ENCODE measurements at regions of chr1 and their contacts with region 1.

Region 1: DNA sequence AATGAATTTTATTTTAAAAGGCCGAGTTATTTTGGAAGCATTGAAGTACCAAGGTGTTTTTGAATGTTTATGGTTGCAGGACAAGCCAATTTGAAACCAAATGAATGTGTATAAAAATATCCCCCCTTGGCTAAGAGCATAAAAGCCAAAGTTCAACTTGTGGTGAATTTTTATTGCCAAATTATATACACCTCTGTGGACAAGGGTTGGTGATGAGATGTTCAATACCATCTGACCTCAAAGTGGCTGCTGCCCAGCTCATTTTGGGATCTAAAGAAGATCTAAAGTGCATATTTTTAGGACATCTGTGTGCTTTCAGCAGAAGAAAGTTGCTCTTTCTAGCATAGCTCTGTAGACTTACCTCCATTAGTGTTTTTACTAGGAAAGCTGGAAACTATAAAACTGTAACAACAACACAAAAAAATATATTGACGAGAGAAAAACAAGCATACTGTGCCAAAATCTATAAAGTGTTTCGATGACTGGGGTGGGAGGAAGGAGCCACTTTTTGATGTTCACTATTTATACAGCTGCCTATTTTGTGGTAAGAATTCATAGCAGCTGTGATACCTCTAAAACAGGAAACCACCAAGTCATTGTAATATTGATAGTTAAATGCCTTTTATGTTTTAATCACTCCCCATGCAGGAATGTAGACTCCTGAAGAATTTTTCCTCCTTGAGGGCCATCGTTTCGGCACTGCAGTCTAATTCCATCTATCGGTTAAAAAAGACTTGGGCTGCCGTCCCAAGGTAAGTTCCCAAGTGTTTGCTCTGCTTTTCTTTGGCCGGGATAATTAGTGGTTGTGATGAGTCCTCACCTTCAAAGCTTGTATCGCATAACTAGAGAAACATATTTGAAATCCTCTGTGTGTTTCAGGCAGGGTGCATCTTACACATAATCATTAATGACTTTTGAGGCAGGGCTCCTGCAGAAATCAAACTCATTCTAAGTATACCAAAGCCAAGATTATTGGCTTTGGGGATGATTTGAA is 83.2 kb downstream of the RGL1 start:
- DNase-seq: no peak
- ATAC-seq: no peak
- H3K4me3 Mint-ChIP-seq: no peak overlapping the region
- H3K27ac Mint-ChIP-seq: no peak overlapping the region
- H3K4me1 Mint-ChIP-seq: peaks cover 8% of the 10 kb centered on the region
- H3K27me3 Mint-ChIP-seq: no peaks in the 10 kb centered on the region
- CTCF ChIP-seq: no peak

Region 2: DNA sequence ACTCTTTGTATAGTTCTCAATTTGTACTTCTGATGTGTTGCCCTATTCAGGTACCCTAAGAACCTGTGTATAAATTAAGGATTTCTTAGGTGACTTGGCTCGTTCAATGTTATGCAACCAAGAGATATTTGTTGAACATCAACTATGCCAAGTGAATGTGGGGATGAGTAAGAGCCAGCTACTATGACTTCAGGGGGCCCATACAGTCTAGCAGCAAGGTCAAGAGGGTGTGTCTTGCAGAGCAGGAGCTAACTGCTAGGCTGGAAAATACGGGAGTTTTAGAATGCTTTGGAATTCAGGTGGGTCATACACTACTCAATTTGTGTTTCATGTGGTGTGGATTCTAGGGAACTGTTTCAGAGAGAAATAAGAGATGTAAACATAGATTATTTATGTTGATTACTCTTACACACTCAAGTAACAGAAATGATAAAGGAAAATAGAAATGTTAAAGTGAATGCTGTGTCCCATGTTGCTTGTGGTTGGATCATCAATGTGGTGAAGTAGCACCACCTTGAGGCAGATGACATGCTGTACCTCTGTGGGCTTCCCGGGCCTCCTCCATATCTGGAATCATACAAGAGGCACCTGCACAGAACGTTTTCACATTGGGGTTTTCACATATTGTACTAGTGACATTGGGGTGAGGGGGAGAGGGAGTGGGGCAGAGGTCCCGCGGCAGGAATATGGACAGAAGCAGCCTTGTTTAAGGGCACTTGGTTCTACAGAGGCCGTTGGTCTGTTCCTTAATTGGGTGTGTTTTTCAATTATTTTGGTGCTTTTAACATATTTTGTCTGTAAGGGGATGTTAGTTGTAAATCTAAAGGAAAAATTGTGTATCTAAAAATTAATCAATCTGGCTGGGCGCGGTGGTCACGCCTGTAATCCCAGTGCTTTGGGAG is 265.0 kb before region 1 on chr1:
- CTCF ChIA-PET with region 1: no interaction called
- POLR2A ChIA-PET with region 1: no interaction called
- intact Hi-C with region 1: no loop called
- DNase-seq: peak; percentile 20
- ATAC-seq: peak; percentile 94
- H3K4me3 Mint-ChIP-seq: no peak overlapping the region
- H3K27ac Mint-ChIP-seq: peak overlapping the region; percentile 50
- H3K4me1 Mint-ChIP-seq: peaks cover 26% of the 10 kb centered on the region
- H3K27me3 Mint-ChIP-seq: no peaks in the 10 kb centered on the region
- CTCF ChIP-seq: no peak

Region 3: GRCh38 chr1:183847641-183848040 is 40.5 kb before region 1 on chr1:
- CTCF ChIA-PET with region 1: no interaction called
- POLR2A ChIA-PET with region 1: no interaction called
- intact Hi-C with region 1: no loop called
- DNase-seq: no peak
- ATAC-seq: no peak
- H3K4me3 Mint-ChIP-seq: no peak overlapping the region
- H3K27ac Mint-ChIP-seq: no peak overlapping the region
- H3K4me1 Mint-ChIP-seq: peaks cover 8% of the 10 kb centered on the region
- H3K27me3 Mint-ChIP-seq: peaks cover 2% of the 10 kb centered on the region
- CTCF ChIP-seq: no peak

Region 4: GRCh38 chr1:183901748-183902330 is 13.7 kb after region 1 on chr1:
- CTCF ChIA-PET with region 1: no interaction called
- POLR2A ChIA-PET with region 1: interaction called, 4 read pairs
- intact Hi-C with region 1: loop called (anchors 2 kb)
- DNase-seq: no peak
- ATAC-seq: peak; percentile 68
- H3K4me3 Mint-ChIP-seq: peak overlapping the region; percentile 33
- H3K27ac Mint-ChIP-seq: peak overlapping the region; percentile 80
- H3K4me1 Mint-ChIP-seq: peaks cover 38% of the 10 kb centered on the region
- H3K27me3 Mint-ChIP-seq: no peaks in the 10 kb centered on the region
- CTCF ChIP-seq: no peak